Astrocyte of the cerebellum (primary cell): ENCODE measurements at regions of chr7 and their contacts with region 1.

Region 1: GRCh38 chr7:156493942-156494341 is 146.6 kb upstream of the RNF32 start:
- DNase-seq: peak; percentile 6
- H3K4me3 ChIP-seq: no peak overlapping the region
- CTCF ChIP-seq: no peak

Region 2: DNA sequence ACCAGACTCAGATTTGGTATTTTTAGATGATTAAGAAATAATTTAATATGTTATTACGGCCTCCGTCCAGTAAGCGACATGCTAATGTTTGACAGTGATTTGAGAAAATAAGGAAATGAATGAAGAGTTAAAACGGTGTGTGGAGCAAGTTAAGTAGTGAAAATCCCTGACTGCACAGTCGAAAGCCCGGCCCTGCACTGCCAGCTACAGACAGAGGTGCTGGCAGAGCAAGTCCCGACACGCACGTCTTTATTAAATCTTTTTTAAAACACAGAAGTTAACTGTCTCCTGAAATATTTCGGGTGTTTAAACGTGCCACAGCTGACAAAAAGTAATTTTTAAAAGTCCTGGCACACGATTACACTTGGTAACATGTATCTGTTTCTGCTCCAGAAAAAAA is 146.8 kb before region 1 on chr7:
- in situ Hi-C with region 1: no loop called
- DNase-seq: no peak
- H3K4me3 ChIP-seq: no peak overlapping the region
- CTCF ChIP-seq: no peak

Region 3: GRCh38 chr7:156389116-156389692 is 104.7 kb before region 1 on chr7:
- in situ Hi-C with region 1: no loop called
- DNase-seq: no peak
- H3K4me3 ChIP-seq: no peak overlapping the region
- CTCF ChIP-seq: no peak

Region 4: GRCh38 chr7:156460858-156461627 is 32.9 kb before region 1 on chr7:
- in situ Hi-C with region 1: no loop called
- DNase-seq: no peak
- H3K4me3 ChIP-seq: no peak overlapping the region
- CTCF ChIP-seq: no peak

Region 5: DNA sequence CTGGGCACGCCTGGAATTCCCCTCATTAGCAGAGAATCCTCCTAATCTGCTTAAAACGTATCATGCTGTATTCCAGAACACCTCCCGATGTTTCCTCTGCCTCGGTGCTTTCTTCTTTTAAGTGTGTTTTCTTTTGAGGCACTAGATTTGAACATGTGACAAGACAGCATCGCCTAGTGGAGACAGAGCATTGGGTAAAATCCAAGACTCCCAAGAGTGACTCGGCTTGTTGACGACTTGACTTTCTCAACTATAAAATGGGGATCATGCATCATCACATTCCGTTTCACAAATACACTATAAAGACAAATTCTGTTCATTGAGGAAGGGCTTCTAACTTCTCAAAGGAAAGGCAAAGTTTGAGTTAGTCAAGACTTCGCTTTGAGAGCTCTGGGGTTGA is 41.0 kb after region 1 on chr7:
- in situ Hi-C with region 1: loop called (anchors 5 kb)
- DNase-seq: no peak
- H3K4me3 ChIP-seq: no peak overlapping the region
- CTCF ChIP-seq: no peak

Region 6: DNA sequence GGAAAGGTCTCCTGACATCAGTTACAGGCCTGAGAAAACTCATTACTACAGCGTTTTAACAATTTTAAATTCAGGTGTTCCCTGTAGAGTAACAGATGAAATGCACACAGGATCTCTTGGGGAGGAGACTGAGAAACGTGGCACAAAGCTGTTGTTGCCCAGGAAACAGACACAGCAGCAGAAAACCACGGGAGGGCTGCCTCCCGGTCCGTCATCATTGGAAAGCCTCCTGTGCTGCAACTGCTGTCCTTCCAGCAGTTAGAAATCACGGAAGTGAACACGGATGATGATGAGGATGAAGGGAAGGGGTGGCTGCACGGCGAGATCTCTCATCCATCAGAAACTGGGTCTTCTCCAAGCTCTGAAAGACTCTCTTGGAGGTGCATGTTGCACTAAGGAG is 52.0 kb after region 1 on chr7:
- in situ Hi-C with region 1: no loop called
- DNase-seq: no peak
- H3K4me3 ChIP-seq: no peak overlapping the region
- CTCF ChIP-seq: no peak